ENCODE measurements at regions of chr12 and their contacts with region 1.

Region 1: GRCh38 chr12:80412369-80412953 is 31.6 kb upstream of the PTPRQ start:
- DNase-seq: no peak
- H3K4me3 ChIP-seq: no peak overlapping the region
- H3K27ac ChIP-seq: no peak overlapping the region
- H3K4me1 ChIP-seq: no peaks in the 10 kb centered on the region
- H3K27me3 ChIP-seq: no peaks in the 10 kb centered on the region
- CTCF ChIP-seq: peak; percentile 41 to 48 (median 45)
- EP300 ChIP-seq: no peak
- POLR2A ChIP-seq: no peak

Region 2: DNA sequence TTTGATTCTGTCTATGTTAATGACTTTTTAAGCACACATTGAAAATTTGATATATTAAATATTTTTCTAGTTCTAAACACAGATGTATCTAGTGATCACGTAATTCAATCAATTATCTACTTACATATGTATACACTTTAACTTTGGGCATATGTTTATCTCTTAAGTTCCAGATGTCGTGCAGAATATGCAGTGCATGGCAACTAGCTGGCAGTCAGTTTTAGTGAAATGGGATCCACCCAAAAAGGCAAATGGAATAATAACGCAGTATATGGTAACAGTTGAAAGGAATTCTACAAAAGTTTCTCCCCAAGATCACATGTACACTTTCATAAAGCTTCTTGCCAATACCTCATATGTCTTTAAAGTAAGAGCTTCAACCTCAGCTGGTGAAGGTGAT is 136.8 kb after region 1 on chr12:
- intact Hi-C with region 1: no loop called
- DNase-seq: no peak
- H3K4me3 ChIP-seq: no peak overlapping the region
- H3K27ac ChIP-seq: no peak overlapping the region
- H3K4me1 ChIP-seq: no peaks in the 10 kb centered on the region
- H3K27me3 ChIP-seq: no peaks in the 10 kb centered on the region
- CTCF ChIP-seq: no peak
- EP300 ChIP-seq: no peak
- POLR2A ChIP-seq: no peak

Region 3: DNA sequence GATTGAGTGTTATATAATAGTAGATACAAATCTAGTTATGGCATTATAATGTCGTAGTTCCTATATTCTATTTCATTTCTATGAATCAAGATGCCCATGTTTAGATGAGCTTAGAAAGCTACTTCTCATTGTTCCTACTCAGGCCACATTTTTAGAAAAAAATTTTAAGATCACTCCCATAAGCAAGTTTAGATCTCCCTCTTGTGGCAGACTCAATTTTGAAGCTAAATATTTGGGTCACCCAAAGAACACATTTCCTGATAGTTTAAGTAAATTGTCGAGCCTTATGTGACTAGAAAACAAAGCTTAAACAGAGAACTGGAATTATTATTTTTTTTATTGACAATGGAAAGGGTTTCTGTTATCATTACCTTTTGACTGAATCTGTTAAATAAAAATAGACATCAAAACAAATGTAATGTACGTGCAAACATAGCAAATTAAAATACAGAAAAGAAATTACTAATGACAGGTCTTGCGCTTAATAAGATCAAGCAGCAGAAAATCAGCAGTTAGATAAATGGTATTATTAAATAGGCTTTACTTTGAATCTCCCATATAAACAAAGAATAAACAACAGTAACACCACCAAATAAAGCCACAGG is 845.6 kb after region 1 on chr12:
- intact Hi-C with region 1: loop called in 1 of 4 experiments (anchors 10 kb)
- DNase-seq: no peak
- H3K4me3 ChIP-seq: no peak overlapping the region
- H3K27ac ChIP-seq: no peak overlapping the region
- H3K4me1 ChIP-seq: no peaks in the 10 kb centered on the region
- H3K27me3 ChIP-seq: no peaks in the 10 kb centered on the region
- CTCF ChIP-seq: peak in 2 of 3 donors; percentile 13 to 42
- EP300 ChIP-seq: no peak
- POLR2A ChIP-seq: no peak

Measured in ovary (tissue), 10 donors.